B cell (primary cell): ENCODE measurements at regions of chrX and their contacts with region 1.

Region 1: DNA sequence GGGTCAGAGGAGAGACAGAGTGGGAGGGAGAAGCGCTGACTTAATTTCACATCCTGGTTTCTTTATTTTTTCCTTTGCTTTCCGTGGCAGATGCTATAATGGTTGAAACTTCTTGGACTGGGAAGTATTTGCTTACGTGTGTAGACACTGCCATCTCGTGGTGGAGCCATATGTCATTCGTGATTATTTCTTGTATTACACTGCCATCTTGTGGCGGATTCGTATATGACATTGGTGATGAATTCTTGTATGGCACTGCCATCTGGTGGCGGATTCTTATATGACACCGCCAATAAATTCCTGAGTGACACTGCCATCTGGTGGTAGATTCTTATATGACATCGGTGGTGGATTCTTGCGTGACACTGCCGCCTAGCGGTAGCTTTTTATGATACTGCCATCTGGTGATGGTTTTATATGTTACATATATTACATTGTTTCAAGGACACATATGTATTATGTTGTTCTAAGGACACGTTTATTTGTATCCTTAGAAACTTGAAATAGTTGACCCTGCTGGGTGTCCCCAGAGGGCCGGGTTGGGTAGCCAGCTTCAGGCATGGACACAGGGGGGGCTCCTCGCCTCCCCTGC is 37.3 kb upstream of the CLCN4 start:
- DNase-seq: peak; percentile 86
- ATAC-seq: peak; percentile 56
- H3K4me3 ChIP-seq: no peak overlapping the region
- H3K4me3 Mint-ChIP-seq: peak overlapping the region; percentile 65
- H3K27ac ChIP-seq: peak overlapping the region in 1 of 2 donors; percentile 55
- H3K27ac Mint-ChIP-seq: peak overlapping the region; percentile 96
- H3K4me1 ChIP-seq: peaks cover 70 to 90% of the 10 kb centered on the region in 2 donors
- H3K4me1 Mint-ChIP-seq: peaks cover 69% of the 10 kb centered on the region
- H3K27me3 ChIP-seq: no peaks in the 10 kb centered on the region
- H3K27me3 Mint-ChIP-seq: no peaks in the 10 kb centered on the region
- CTCF ChIP-seq: peak; percentile 98

Region 2: DNA sequence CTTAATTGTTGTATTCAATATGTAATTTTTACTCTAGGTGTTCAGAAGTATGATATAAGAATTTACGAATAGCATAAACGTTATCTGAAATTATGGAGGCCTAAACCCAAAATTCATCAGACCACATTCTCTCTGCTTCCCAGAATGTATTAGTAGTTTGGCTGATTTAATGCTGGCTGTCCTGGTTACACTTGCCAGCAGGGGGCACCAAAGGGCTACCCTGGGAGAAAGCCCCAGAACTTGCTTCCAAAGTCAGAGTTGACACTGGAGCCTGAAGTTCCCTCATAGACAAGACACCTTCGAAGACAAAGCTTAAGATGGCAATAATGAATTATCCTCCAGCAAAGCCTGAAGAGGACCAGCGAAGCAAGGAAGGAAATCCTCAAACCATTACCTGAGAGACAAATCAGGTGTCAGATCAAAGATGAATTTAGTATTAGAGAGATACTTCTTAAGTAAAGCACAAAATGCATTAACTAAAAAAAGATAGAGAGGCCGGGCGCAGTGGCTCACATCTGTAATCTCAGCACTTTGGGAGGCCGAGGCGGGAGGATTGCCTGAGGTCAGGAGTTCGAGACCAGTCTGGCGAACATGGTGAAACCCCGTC is 1376.3 kb before region 1 on chrX:
- CTCF ChIA-PET with region 1: interaction called, 3 read pairs
- POLR2A ChIA-PET with region 1: no interaction called
- intact Hi-C with region 1: loop called (anchors 10 kb)
- DNase-seq: peak; percentile 56
- ATAC-seq: no peak
- H3K4me3 ChIP-seq: no peak overlapping the region
- H3K4me3 Mint-ChIP-seq: no peak overlapping the region
- H3K27ac ChIP-seq: no peak overlapping the region
- H3K27ac Mint-ChIP-seq: no peak overlapping the region
- H3K4me1 ChIP-seq: no peaks in the 10 kb centered on the region
- H3K4me1 Mint-ChIP-seq: no peaks in the 10 kb centered on the region
- H3K27me3 ChIP-seq: peaks cover 0 to 2% (median 0%) of the 10 kb centered on the region in 4 experiments
- H3K27me3 Mint-ChIP-seq: peaks cover 3% of the 10 kb centered on the region
- CTCF ChIP-seq: peak; percentile 66

Region 3: DNA sequence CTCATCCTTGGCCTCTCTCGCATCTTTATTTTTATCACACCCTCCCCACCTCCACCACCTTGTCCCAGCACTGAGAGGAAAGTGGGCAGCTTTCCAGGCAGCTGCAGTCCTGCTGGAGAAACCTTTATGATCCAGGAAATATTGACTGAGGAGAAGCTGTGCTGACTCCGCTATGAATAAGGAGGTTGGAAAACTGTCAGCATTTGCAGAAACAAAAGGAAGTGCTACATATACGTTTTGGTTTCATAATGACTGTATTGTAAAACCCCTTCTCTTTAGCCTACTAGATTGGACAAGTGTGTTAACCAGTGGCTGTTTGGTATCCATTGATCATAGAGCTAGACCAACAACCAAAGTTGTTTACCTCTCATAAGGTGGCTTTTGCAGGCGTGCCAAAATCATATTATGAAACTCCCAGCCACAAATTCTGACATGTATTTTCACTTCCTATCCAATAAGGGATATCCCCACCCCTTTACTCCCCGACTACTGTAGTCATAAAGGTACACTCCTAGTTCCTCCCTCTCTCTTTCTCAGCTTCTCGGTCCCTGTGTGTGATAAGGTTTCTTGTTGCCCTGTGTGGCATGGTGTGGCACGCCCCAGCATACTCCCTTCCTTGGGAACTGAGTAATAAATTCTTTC is 442.3 kb before region 1 on chrX:
- CTCF ChIA-PET with region 1: no interaction called
- POLR2A ChIA-PET with region 1: no interaction called
- intact Hi-C with region 1: loop called (anchors 1 kb)
- DNase-seq: peak; percentile 82
- ATAC-seq: peak; percentile 91
- H3K4me3 ChIP-seq: no peak overlapping the region
- H3K4me3 Mint-ChIP-seq: peak overlapping the region; percentile 77
- H3K27ac ChIP-seq: peak overlapping the region; percentile 69 to 81
- H3K27ac Mint-ChIP-seq: peak overlapping the region; percentile 92
- H3K4me1 ChIP-seq: peaks cover 24 to 38% of the 10 kb centered on the region in 2 donors
- H3K4me1 Mint-ChIP-seq: peaks cover 44% of the 10 kb centered on the region
- H3K27me3 ChIP-seq: no peaks in the 10 kb centered on the region
- H3K27me3 Mint-ChIP-seq: no peaks in the 10 kb centered on the region
- CTCF ChIP-seq: no peak

Region 4: DNA sequence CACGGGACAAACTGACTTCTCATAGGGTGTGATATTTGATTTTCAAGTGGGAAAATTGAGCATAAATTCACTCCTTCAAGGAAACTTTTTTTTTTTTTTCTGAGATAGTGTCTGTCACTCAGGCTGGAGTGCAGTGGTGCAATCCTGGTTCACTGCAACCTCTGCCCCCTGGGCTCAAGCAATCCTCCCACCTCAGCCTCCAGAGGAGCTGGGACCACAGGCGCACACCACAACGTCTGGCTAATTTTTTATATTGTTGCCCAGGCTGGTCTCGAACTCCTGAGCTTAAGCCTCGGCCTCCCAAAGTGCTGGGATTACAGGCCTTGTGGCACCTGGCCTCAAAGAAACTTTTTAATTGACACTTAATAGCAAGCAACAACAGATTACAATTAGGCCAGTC is 138.6 kb before region 1 on chrX:
- CTCF ChIA-PET with region 1: interaction called, 18 read pairs
- POLR2A ChIA-PET with region 1: no interaction called
- intact Hi-C with region 1: no loop called
- DNase-seq: no peak
- ATAC-seq: no peak
- H3K4me3 ChIP-seq: peak overlapping the region in 1 of 5 experiments; percentile 16
- H3K4me3 Mint-ChIP-seq: peak overlapping the region; percentile 64
- H3K27ac ChIP-seq: peak overlapping the region; percentile 70 to 82
- H3K27ac Mint-ChIP-seq: peak overlapping the region; percentile 94
- H3K4me1 ChIP-seq: peaks cover 26 to 34% of the 10 kb centered on the region in 2 donors
- H3K4me1 Mint-ChIP-seq: peaks cover 34% of the 10 kb centered on the region
- H3K27me3 ChIP-seq: no peaks in the 10 kb centered on the region
- H3K27me3 Mint-ChIP-seq: no peaks in the 10 kb centered on the region
- CTCF ChIP-seq: no peak

Region 5: GRCh38 chrX:10014462-10015356 is 104.8 kb before region 1 on chrX:
- CTCF ChIA-PET with region 1: interaction called, 22 read pairs
- POLR2A ChIA-PET with region 1: no interaction called
- intact Hi-C with region 1: loop called (anchors 1 kb)
- DNase-seq: peak; percentile 87
- ATAC-seq: peak; percentile 87
- H3K4me3 ChIP-seq: peak overlapping the region; percentile 16 to 68 (median 65)
- H3K4me3 Mint-ChIP-seq: peak overlapping the region; percentile 73
- H3K27ac ChIP-seq: peak overlapping the region; percentile 50 to 74
- H3K27ac Mint-ChIP-seq: peak overlapping the region; percentile 84
- H3K4me1 ChIP-seq: peaks cover 25 to 41% of the 10 kb centered on the region in 2 donors
- H3K4me1 Mint-ChIP-seq: peaks cover 51% of the 10 kb centered on the region
- H3K27me3 ChIP-seq: no peaks in the 10 kb centered on the region
- H3K27me3 Mint-ChIP-seq: no peaks in the 10 kb centered on the region
- CTCF ChIP-seq: no peak

Region 6: DNA sequence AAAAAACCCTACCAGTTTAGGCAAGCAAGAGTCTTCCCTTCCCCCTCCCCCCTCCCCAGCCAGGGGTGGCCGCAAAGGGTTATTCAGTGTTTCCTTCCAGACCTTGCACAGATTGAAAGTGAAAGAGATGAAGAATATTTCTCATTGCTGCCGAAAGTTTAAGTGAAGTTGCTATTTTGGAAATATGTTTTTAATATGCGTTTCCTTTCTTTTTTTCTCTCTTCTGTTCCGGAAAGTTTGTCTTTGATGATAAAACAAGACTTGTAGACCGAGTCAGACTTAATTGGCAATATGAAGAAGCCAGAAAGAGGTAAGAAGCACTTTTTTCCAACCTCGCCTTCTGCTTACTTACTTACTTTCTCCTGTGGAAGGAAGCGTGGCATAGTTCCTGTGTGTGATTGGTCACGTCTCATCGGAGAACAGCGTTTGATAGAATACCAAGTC is 21.2 kb before region 1 on chrX:
- CTCF ChIA-PET with region 1: interaction called, 26 read pairs
- POLR2A ChIA-PET with region 1: interaction called, 8 read pairs
- intact Hi-C with region 1: no loop called
- DNase-seq: peak; percentile 74
- ATAC-seq: peak; percentile 81
- H3K4me3 ChIP-seq: peak overlapping the region; percentile 32 to 64 (median 51)
- H3K4me3 Mint-ChIP-seq: peak overlapping the region; percentile 93
- H3K27ac ChIP-seq: peak overlapping the region; percentile 65 to 80
- H3K27ac Mint-ChIP-seq: peak overlapping the region; percentile 92
- H3K4me1 ChIP-seq: peaks cover 22 to 64% of the 10 kb centered on the region in 2 donors
- H3K4me1 Mint-ChIP-seq: peaks cover 60% of the 10 kb centered on the region
- H3K27me3 ChIP-seq: no peaks in the 10 kb centered on the region
- H3K27me3 Mint-ChIP-seq: no peaks in the 10 kb centered on the region
- CTCF ChIP-seq: no peak

Region 7: GRCh38 chrX:10217198-10217597 is 97.7 kb after region 1 on chrX:
- CTCF ChIA-PET with region 1: no interaction called
- POLR2A ChIA-PET with region 1: no interaction called
- intact Hi-C with region 1: no loop called
- DNase-seq: peak; percentile 9
- ATAC-seq: no peak
- H3K4me3 ChIP-seq: no peak overlapping the region
- H3K4me3 Mint-ChIP-seq: no peak overlapping the region
- H3K27ac ChIP-seq: no peak overlapping the region
- H3K27ac Mint-ChIP-seq: no peak overlapping the region
- H3K4me1 ChIP-seq: peaks cover 0 to 7% of the 10 kb centered on the region in 2 donors
- H3K4me1 Mint-ChIP-seq: peaks cover 12% of the 10 kb centered on the region
- H3K27me3 ChIP-seq: no peaks in the 10 kb centered on the region
- H3K27me3 Mint-ChIP-seq: no peaks in the 10 kb centered on the region
- CTCF ChIP-seq: no peak